ENCODE measurements at regions of chr6 and their contacts with region 1.

Region 1: GRCh38 chr6:127539272-127539671 is 20.1 kb upstream of the MTCL3 start:
- DNase-seq: peak in 3 of 9 donors; percentile 18 to 30 (median 22)
- ATAC-seq: peak; percentile 65
- H3K4me3 ChIP-seq: no peak overlapping the region
- H3K4me3 Mint-ChIP-seq: no peak overlapping the region
- H3K27ac ChIP-seq: no peak overlapping the region
- H3K27ac Mint-ChIP-seq: no peak overlapping the region
- H3K4me1 ChIP-seq: no peaks in the 10 kb centered on the region
- H3K4me1 Mint-ChIP-seq: peaks cover 0 to 3% (median 0%) of the 10 kb centered on the region in 7 donors
- H3K27me3 ChIP-seq: no peaks in the 10 kb centered on the region
- H3K27me3 Mint-ChIP-seq: peaks cover 12 to 30% (median 18%) of the 10 kb centered on the region in 5 donors

Region 2: DNA sequence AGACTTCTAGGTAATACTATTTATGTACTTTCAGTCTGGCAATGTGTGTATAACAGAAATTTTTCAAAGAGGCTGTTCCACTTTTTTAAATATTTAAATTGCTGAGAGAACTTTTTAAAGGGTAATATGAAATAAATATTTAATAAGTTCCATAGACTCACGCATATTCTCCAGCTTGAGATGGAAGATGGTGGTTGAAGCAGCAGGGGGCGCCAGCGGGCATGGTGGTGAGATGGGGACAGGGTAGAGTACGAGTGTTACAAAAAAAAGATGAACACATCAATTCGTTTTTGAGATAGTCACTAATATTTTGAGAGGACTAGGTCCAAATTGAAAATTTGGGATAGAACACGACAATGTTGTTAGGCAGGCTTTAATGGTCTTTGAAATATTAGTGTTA is 352.4 kb before region 1 on chr6:
- CTCF ChIA-PET with region 1: no interaction called
- POLR2A ChIA-PET with region 1: no interaction called
- intact Hi-C with region 1: loop called (anchors 1 to 5 kb)
- DNase-seq: peak; percentile 1 to 60 (median 22)
- ATAC-seq: peak; percentile 63
- H3K4me3 ChIP-seq: no peak overlapping the region
- H3K4me3 Mint-ChIP-seq: no peak overlapping the region
- H3K27ac ChIP-seq: no peak overlapping the region
- H3K27ac Mint-ChIP-seq: no peak overlapping the region
- H3K4me1 ChIP-seq: no peaks in the 10 kb centered on the region
- H3K4me1 Mint-ChIP-seq: no peaks in the 10 kb centered on the region
- H3K27me3 ChIP-seq: no peaks in the 10 kb centered on the region
- H3K27me3 Mint-ChIP-seq: peaks cover 4 to 14% (median 8%) of the 10 kb centered on the region in 5 donors

Region 3: GRCh38 chr6:127464881-127465459 is 74.3 kb before region 1 on chr6:
- CTCF ChIA-PET with region 1: interaction called, 52 read pairs
- POLR2A ChIA-PET with region 1: no interaction called
- intact Hi-C with region 1: loop called (anchors 1 kb)
- DNase-seq: peak; percentile 11 to 53 (median 39)
- ATAC-seq: peak; percentile 83
- H3K4me3 ChIP-seq: no peak overlapping the region
- H3K4me3 Mint-ChIP-seq: no peak overlapping the region
- H3K27ac ChIP-seq: no peak overlapping the region
- H3K27ac Mint-ChIP-seq: no peak overlapping the region
- H3K4me1 ChIP-seq: no peaks in the 10 kb centered on the region
- H3K4me1 Mint-ChIP-seq: peaks cover 0 to 13% (median 0%) of the 10 kb centered on the region in 7 donors
- H3K27me3 ChIP-seq: no peaks in the 10 kb centered on the region
- H3K27me3 Mint-ChIP-seq: no peaks in the 10 kb centered on the region